Ascending aorta (tissue), 2 donors: ENCODE measurements at regions of chr9 and their contacts with region 1.

Region 1: GRCh38 chr9:94821098-94821887 is 94.8 kb downstream of the AOPEP start:
- DNase-seq: no peak
- H3K4me3 ChIP-seq: no peak overlapping the region
- H3K27ac ChIP-seq: peak overlapping the region; percentile 82 to 89
- H3K4me1 ChIP-seq: peaks cover 5 to 44% of the 10 kb centered on the region in 2 donors
- H3K27me3 ChIP-seq: no peaks in the 10 kb centered on the region
- CTCF ChIP-seq: no peak

Region 2: GRCh38 chr9:94097788-94098414 is 723.4 kb before region 1 on chr9:
- intact Hi-C with region 1: no loop called
- DNase-seq: no peak
- H3K4me3 ChIP-seq: no peak overlapping the region
- H3K27ac ChIP-seq: no peak overlapping the region
- H3K4me1 ChIP-seq: no peaks in the 10 kb centered on the region
- H3K27me3 ChIP-seq: no peaks in the 10 kb centered on the region
- CTCF ChIP-seq: no peak

Region 3: DNA sequence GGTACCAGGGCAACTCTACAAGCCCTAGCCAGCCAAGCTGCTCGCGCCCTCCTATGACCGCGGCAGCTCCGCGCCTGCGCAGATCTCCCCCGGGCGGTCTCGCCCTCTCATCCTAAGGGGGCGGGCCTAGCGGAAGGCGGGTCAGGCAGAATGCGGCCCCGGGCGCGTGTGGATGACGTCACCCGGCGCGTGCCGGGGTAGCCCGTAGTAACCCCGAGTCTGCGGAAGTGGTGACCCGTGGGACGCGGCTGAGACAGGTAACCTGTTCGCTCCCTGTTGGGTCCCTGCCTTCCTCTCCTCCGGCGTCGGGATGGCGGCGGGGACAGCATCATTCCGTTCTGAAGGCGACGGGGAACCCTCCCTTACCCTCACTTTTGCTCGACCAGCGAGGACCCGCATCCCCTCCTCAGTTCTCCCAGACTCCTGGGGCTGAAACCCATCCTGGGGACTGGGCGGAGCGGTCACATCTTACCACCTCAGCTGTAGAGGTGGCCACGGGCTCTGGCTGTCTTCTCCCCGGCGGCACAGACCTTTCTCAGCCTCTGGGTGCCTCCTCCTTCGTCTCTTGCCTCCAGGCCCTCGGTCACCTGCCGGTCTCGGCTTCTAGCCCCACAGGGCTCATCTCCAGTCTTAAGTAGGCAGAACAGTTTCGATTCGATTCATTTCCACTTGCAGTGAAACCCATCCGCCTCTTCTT is 94.7 kb before region 1 on chr9 and contains the start of gene AOPEP:
- intact Hi-C with region 1: loop called (anchors 10 kb)
- DNase-seq: peak; percentile 89 to 99
- H3K4me3 ChIP-seq: peak within 1 kb of the TSS; percentile 66 to 89
- H3K27ac ChIP-seq: peak within 1 kb of the TSS; percentile 83
- H3K4me1 ChIP-seq: peaks cover 0 to 9% of the 10 kb centered on the region in 2 donors
- H3K27me3 ChIP-seq: no peaks in the 10 kb centered on the region
- CTCF ChIP-seq: no peak
- total RNA-seq, gene AOPEP: 333 TPM

Region 4: GRCh38 chr9:94805585-94805984 is 15.7 kb before region 1 on chr9:
- intact Hi-C with region 1: loop called (anchors 2 kb)
- DNase-seq: peak in 1 of 2 donors; percentile 71
- H3K4me3 ChIP-seq: no peak overlapping the region
- H3K27ac ChIP-seq: peak overlapping the region; percentile 94 to 96
- H3K4me1 ChIP-seq: peaks cover 35 to 82% of the 10 kb centered on the region in 2 donors
- H3K27me3 ChIP-seq: no peaks in the 10 kb centered on the region
- CTCF ChIP-seq: no peak